PC-9 (cell line): ENCODE measurements at regions of chr3 and their contacts with region 1.

Region 1: GRCh38 chr3:113495035-113495434 is 19.9 kb downstream of the SPICE1 start:
- DNase-seq: peak; percentile 12 to 46
- H3K4me3 ChIP-seq: no peak overlapping the region
- H3K27ac ChIP-seq: no peak overlapping the region; the same call in 1 of the 2 replicates
- H3K4me1 ChIP-seq: peaks cover 7% of the 10 kb centered on the region
- H3K27me3 ChIP-seq: no peaks in the 10 kb centered on the region
- CTCF ChIP-seq: peak; percentile 69

Region 2: GRCh38 chr3:113454057-113454456 is 41.0 kb before region 1 on chr3:
- CTCF ChIA-PET with region 1: no interaction called
- POLR2A ChIA-PET with region 1: no interaction called
- intact Hi-C with region 1: no loop called
- DNase-seq: no peak
- H3K4me3 ChIP-seq: no peak overlapping the region
- H3K27ac ChIP-seq: no peak overlapping the region
- H3K4me1 ChIP-seq: no peaks in the 10 kb centered on the region
- H3K27me3 ChIP-seq: no peaks in the 10 kb centered on the region
- CTCF ChIP-seq: no peak

Region 3: DNA sequence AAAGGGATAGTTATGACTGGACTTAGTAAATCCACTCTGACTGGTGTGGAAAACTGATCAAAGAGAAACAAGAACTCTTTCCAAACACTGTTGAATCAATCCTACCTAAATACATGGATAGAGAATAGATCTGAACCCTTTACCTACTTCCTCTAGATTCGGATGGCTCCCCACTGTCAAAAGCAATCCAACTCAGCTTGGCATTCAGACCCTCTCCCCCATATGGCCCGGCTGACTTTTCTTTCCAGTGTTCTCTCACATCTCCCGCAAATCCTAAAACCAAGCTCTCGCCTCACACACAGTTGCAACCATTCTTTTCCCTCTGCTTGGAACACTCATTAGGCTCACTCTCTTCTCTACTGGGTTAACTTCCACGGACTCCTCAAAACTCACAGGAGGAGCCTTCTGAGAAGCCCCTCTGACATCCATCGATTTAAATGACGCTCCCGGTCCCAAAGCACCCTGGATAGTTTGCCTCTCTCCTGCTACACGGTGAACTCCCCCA is 19.3 kb after region 1 on chr3:
- CTCF ChIA-PET with region 1: interaction called, 7 read pairs
- POLR2A ChIA-PET with region 1: no interaction called
- intact Hi-C with region 1: loop called (anchors 2 kb)
- DNase-seq: no peak
- H3K4me3 ChIP-seq: peak overlapping the region; percentile 87
- H3K27ac ChIP-seq: peak overlapping the region; percentile 64
- H3K4me1 ChIP-seq: peaks cover 17% of the 10 kb centered on the region; the same call in 1 of the 2 replicates
- H3K27me3 ChIP-seq: no peaks in the 10 kb centered on the region
- CTCF ChIP-seq: no peak

Region 4: GRCh38 chr3:113557374-113557773 is 62.3 kb after region 1 on chr3:
- CTCF ChIA-PET with region 1: interaction called, 6 read pairs
- POLR2A ChIA-PET with region 1: no interaction called
- intact Hi-C with region 1: loop called (anchors 2 kb)
- DNase-seq: peak; percentile 43 to 70
- H3K4me3 ChIP-seq: no peak overlapping the region; the same call in 1 of the 2 replicates
- H3K27ac ChIP-seq: peak overlapping the region; percentile 60
- H3K4me1 ChIP-seq: peaks cover 23% of the 10 kb centered on the region
- H3K27me3 ChIP-seq: no peaks in the 10 kb centered on the region
- CTCF ChIP-seq: no peak

Region 5: GRCh38 chr3:113626503-113627371 is 131.7 kb after region 1 on chr3:
- CTCF ChIA-PET with region 1: interaction called, 9 read pairs
- POLR2A ChIA-PET with region 1: no interaction called
- intact Hi-C with region 1: loop called (anchors 1 kb)
- DNase-seq: peak; percentile 41
- H3K4me3 ChIP-seq: no peak overlapping the region
- H3K27ac ChIP-seq: no peak overlapping the region
- H3K4me1 ChIP-seq: 0 out of 2 replicates have a peak, but pooled peaks cover 4% of the 10 kb centered on the region
- H3K27me3 ChIP-seq: no peaks in the 10 kb centered on the region
- CTCF ChIP-seq: peak; percentile 86

Region 6: DNA sequence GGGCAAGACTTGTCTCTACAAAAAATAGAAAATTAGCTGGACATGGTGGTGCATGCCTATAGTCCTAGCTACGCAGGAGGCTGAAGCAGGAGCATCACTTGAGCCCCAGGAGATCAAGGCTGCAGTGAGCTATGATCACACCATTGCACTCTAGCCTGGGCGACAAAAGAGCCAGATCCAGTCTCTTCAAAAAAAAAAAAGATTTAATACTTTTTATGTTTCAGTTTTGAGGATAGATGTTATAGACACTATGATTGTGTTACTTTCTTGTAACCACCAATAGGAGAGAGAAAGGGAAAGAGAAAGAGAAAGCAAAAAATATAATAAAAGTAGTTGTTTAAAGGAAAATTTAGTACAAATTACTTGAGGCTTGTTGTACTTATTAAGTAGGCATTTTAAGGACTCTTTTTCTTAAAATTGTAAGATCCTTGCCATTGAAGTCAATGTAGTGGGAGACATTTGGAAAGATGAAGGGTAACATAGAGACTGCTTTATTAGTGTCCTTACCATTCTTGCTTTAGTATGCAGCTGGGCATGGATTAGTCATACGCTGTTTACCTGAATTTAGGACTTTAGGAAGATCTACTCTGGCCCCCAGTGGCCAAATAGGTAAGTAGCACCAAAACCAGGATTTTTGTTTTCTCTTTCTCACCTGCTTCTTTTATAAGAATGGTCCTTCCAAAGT is 417.7 kb after region 1 on chr3:
- CTCF ChIA-PET with region 1: no interaction called
- POLR2A ChIA-PET with region 1: no interaction called
- intact Hi-C with region 1: loop called (anchors 2 kb)
- DNase-seq: peak; percentile 48 to 77
- H3K4me3 ChIP-seq: no peak overlapping the region
- H3K27ac ChIP-seq: no peak overlapping the region
- H3K4me1 ChIP-seq: peaks cover 4% of the 10 kb centered on the region; the same call in 1 of the 2 replicates
- H3K27me3 ChIP-seq: no peaks in the 10 kb centered on the region
- CTCF ChIP-seq: peak; percentile 84